ENCODE measurements at regions of chr7 and their contacts with region 1.

Region 1: DNA sequence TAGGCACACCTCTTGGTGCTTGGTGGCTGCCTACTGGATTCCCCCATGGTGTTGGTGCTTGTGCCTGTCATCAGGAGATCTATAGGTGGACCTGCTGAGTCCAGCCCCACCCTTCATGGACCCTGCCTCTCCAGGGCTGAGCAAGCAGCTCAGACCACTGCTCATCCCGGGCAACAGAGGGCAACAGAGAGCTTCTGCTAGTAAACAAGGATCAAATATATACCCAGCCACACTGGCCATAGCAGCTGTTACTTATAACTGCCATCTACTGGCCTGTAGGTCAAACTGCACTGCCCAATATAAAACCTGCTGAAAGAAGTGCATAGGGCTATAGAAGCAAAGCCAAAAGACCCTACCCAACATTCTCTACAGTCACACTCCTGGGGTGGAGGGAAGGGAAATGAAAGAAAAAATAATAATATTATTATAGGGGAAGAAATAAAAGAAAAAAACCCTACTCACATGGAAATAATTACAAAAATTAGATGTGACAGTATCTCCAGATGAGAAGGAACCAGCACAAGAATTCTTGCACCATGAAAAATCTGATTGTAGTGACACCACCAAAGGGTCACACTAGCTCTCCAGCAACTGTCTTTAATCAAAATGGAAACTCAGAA is 54.9 kb upstream of the ZNF800 start:
- DNase-seq: peak; percentile 84
- ATAC-seq: peak; percentile 100
- H3K4me3 ChIP-seq: no peak overlapping the region
- H3K4me3 Mint-ChIP-seq: no peak overlapping the region
- H3K27ac ChIP-seq: no peak overlapping the region
- H3K27ac Mint-ChIP-seq: peak overlapping the region; percentile 71
- H3K4me1 ChIP-seq: peaks cover 0 to 4% of the 10 kb centered on the region in 2 donors
- H3K4me1 Mint-ChIP-seq: peaks cover 3% of the 10 kb centered on the region
- H3K27me3 ChIP-seq: peaks cover 0 to 20% (median 7%) of the 10 kb centered on the region in 4 experiments
- H3K27me3 Mint-ChIP-seq: peaks cover 58% of the 10 kb centered on the region
- CTCF ChIP-seq: peak; percentile 94

Region 2: DNA sequence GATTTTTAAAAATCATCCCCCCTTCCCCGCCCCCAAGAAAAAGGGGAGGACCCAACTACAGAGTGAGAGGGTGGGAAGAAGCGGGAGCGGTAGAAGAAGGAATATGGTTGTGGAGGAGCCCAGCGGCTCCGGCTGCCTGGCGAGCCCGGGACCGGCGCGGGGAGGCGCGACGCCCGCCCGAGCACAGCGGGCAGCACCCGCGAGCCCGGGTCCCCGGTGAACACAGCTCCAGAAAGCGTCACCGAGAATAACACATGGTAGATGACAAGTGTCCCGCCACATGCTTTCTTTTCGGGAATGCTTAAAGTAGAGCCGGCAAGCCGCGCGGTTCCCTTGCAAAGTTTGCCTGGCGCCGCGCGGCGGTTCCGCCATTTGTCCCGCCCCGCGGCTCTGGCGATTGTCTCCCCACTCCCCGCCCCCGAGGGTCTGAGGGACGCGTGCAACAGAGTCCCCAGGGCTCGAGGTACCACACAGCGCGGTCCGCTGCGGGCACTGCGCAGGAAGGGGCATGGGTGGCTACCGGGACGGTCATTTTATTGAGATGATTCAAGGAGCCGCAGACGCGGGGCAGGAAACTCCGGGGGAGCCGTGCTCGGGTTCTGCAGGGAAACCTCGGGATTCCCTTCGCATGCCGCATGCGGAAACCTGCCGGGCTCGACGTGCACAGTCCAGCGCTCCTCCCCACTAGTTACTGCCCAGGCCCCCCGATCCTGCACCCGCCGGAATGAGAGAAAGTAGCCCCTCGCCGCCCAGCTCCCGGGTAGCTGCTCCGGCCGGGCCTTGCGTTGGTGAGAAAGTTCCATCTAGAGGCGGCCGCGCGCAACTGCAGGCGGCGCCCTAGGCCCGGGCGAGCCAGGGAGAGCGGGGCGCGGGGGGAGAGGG is 193.9 kb before region 1 on chr7:
- CTCF ChIA-PET with region 1: interaction called, 3 read pairs
- POLR2A ChIA-PET with region 1: no interaction called
- intact Hi-C with region 1: loop called (anchors 5 kb)
- DNase-seq: peak; percentile 73
- ATAC-seq: peak; percentile 79
- H3K4me3 ChIP-seq: peak overlapping the region; percentile 58 to 94 (median 74)
- H3K4me3 Mint-ChIP-seq: peak overlapping the region; percentile 89
- H3K27ac ChIP-seq: no peak overlapping the region
- H3K27ac Mint-ChIP-seq: no peak overlapping the region
- H3K4me1 ChIP-seq: peaks cover 21 to 24% of the 10 kb centered on the region in 2 donors
- H3K4me1 Mint-ChIP-seq: peaks cover 20% of the 10 kb centered on the region
- H3K27me3 ChIP-seq: peaks cover 2 to 82% (median 52%) of the 10 kb centered on the region in 4 experiments
- H3K27me3 Mint-ChIP-seq: peaks cover 70% of the 10 kb centered on the region
- CTCF ChIP-seq: peak; percentile 87

Region 3: GRCh38 chr7:127353897-127354296 is 93.5 kb before region 1 on chr7:
- CTCF ChIA-PET with region 1: interaction called, 93 read pairs
- POLR2A ChIA-PET with region 1: no interaction called
- intact Hi-C with region 1: no loop called
- DNase-seq: no peak
- ATAC-seq: no peak
- H3K4me3 ChIP-seq: no peak overlapping the region
- H3K4me3 Mint-ChIP-seq: no peak overlapping the region
- H3K27ac ChIP-seq: no peak overlapping the region
- H3K27ac Mint-ChIP-seq: no peak overlapping the region
- H3K4me1 ChIP-seq: no peaks in the 10 kb centered on the region
- H3K4me1 Mint-ChIP-seq: peaks cover 5% of the 10 kb centered on the region
- H3K27me3 ChIP-seq: no peaks in the 10 kb centered on the region
- H3K27me3 Mint-ChIP-seq: no peaks in the 10 kb centered on the region
- CTCF ChIP-seq: no peak

Region 4: DNA sequence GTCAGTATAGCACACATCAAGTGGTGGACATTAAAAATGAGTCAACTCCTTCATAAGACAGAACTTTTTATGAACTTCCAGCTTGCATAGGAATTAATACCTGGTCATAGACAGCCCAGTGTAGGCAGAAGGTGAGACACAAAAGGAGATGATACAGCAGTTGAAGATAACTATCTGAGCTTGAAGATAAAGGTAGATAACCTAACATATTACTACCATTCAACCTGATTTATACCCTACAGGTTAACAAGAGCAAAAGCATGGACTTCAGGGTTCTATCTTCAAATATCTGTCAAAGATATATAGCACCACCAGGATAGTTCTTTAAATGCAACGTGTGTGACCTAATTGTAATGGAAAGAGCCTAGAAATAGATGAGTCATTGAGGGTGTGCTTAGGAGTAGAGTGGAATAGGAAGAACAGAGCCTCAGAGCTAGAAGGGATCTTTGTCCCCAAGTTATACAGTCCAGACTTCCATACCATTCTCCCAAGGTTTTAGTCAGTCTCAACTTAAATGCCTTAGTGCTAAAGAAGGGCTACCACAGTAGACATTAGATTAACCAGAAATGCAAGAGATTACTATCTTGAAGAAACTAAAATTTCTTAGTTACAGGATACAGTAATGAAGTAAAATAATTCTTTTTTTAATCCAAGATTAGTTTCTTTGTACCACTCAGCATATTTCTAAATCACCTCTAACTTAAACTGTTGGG is 64.2 kb before region 1 on chr7:
- CTCF ChIA-PET with region 1: interaction called, 19 read pairs
- POLR2A ChIA-PET with region 1: no interaction called
- intact Hi-C with region 1: no loop called
- DNase-seq: no peak
- ATAC-seq: no peak
- H3K4me3 ChIP-seq: no peak overlapping the region
- H3K4me3 Mint-ChIP-seq: peak overlapping the region; percentile 2
- H3K27ac ChIP-seq: peak overlapping the region in 1 of 2 donors; percentile 24
- H3K27ac Mint-ChIP-seq: peak overlapping the region; percentile 39
- H3K4me1 ChIP-seq: peaks cover 9 to 39% of the 10 kb centered on the region in 2 donors
- H3K4me1 Mint-ChIP-seq: peaks cover 56% of the 10 kb centered on the region
- H3K27me3 ChIP-seq: no peaks in the 10 kb centered on the region
- H3K27me3 Mint-ChIP-seq: no peaks in the 10 kb centered on the region
- CTCF ChIP-seq: no peak

Region 5: GRCh38 chr7:127413962-127414361 is 33.5 kb before region 1 on chr7:
- CTCF ChIA-PET with region 1: interaction called, 22 read pairs
- POLR2A ChIA-PET with region 1: no interaction called
- intact Hi-C with region 1: loop called (anchors 1 kb)
- DNase-seq: peak; percentile 71
- ATAC-seq: peak; percentile 67
- H3K4me3 ChIP-seq: peak overlapping the region in 1 of 5 experiments; percentile 25
- H3K4me3 Mint-ChIP-seq: peak overlapping the region; percentile 83
- H3K27ac ChIP-seq: peak overlapping the region; percentile 64 to 80
- H3K27ac Mint-ChIP-seq: peak overlapping the region; percentile 90
- H3K4me1 ChIP-seq: peaks cover 71 to 75% of the 10 kb centered on the region in 2 donors
- H3K4me1 Mint-ChIP-seq: peaks cover 70% of the 10 kb centered on the region
- H3K27me3 ChIP-seq: no peaks in the 10 kb centered on the region
- H3K27me3 Mint-ChIP-seq: no peaks in the 10 kb centered on the region
- CTCF ChIP-seq: no peak

Measured in B cell (primary cell).